Mammary epithelial cell (primary cell): ENCODE measurements at regions of chr6 and their contacts with region 1.

Region 1: GRCh38 chr6:104118274-104118673 is 741.4 kb downstream of the HACE1 start:
- DNase-seq: peak; percentile 11
- H3K4me3 ChIP-seq: no peak overlapping the region
- H3K27ac ChIP-seq: no peak overlapping the region
- H3K4me1 ChIP-seq: no peaks in the 10 kb centered on the region
- H3K27me3 ChIP-seq: no peaks in the 10 kb centered on the region
- CTCF ChIP-seq: no peak

Region 2: DNA sequence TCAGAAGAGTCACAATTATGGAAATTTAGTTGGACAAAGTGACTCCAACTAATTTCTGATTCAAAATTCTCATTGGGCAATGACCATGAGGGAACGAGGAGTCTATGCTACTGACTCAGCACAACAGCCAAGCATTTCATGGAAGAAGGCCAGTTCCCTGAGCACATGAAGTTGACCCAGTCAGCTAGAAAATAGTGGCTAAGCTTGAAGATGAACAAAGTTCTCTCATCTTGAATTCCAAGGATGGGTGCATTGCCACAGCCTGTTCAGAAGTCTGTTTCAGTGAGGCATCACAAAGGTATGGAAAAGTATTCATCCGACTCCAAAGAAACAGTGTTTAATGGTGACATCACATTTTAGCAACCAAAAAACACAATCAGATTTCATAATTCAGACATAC is 64.5 kb after region 1 on chr6:
- CTCF ChIA-PET with region 1: no interaction called
- dilution Hi-C with region 1: no loop called
- in situ Hi-C with region 1: no loop called
- intact Hi-C with region 1: loop called (anchors 5 kb)
- DNase-seq: peak; percentile 48
- H3K4me3 ChIP-seq: no peak overlapping the region
- H3K27ac ChIP-seq: no peak overlapping the region
- H3K4me1 ChIP-seq: no peaks in the 10 kb centered on the region
- H3K27me3 ChIP-seq: no peaks in the 10 kb centered on the region
- CTCF ChIP-seq: no peak